ENCODE measurements at regions of chr20 and their contacts with region 1.

Region 1: GRCh38 chr20:44521484-44522481 is at the start of gene SERINC3:
- DNase-seq: peak; percentile 91 to 99
- H3K4me3 ChIP-seq: peak within 1 kb of the TSS; percentile 70 to 89
- H3K27ac ChIP-seq: peak within 1 kb of the TSS; percentile 94 to 99
- H3K4me1 ChIP-seq: peaks cover 9 to 35% of the 10 kb centered on the region in 2 donors
- H3K27me3 ChIP-seq: no peaks in the 10 kb centered on the region
- CTCF ChIP-seq: peak in 1 of 3 experiments; percentile 23
- total RNA-seq, gene SERINC3: 78.1 TPM

Region 2: DNA sequence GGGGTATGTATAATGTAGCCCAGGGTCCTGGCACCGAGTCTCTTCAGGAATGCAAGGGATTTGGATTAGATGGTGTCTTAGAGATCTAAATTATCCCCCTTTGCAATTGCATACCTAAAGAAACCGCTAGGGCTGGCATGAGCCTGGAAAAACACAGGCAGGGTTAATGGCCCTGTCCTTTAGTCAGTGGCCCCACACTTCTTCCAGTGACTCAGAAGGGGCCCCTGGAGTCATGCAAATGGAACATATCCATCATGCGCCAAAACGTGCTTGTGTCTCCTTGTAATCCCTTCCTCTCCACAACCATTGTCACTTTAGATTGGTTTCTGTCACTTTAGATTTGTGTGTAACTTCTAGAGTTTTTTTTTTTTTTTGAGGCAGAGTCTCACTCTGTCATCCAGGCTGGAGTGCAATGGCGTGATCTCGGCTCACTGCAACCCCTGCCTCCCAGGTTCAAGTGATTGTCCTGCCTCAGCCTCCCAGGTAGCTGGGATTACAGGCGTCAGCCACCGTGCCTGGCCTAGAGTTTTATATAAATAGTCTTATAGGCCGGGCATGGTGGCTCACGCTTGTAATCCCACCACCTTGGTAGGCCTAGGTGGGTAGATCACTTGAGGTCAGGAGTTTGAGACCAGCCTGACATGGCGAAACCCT is 863.6 kb before region 1 on chr20:
- intact Hi-C with region 1: no loop called
- DNase-seq: no peak
- H3K4me3 ChIP-seq: peak overlapping the region in 1 of 2 donors; percentile 75
- H3K27ac ChIP-seq: no peak overlapping the region
- H3K4me1 ChIP-seq: no peaks in the 10 kb centered on the region
- H3K27me3 ChIP-seq: no peaks in the 10 kb centered on the region
- CTCF ChIP-seq: no peak

Region 3: GRCh38 chr20:44532259-44532980 is 10.6 kb after region 1 on chr20:
- intact Hi-C with region 1: loop called (anchors 1 kb)
- DNase-seq: no peak
- H3K4me3 ChIP-seq: peak overlapping the region; percentile 73 to 99
- H3K27ac ChIP-seq: peak overlapping the region; percentile 3 to 76
- H3K4me1 ChIP-seq: peaks cover 0 to 10% of the 10 kb centered on the region in 2 donors
- H3K27me3 ChIP-seq: no peaks in the 10 kb centered on the region
- CTCF ChIP-seq: no peak

Region 4: GRCh38 chr20:44601801-44602204 is 80.0 kb after region 1 on chr20:
- intact Hi-C with region 1: loop called (anchors 2 kb)
- DNase-seq: peak in 1 of 2 donors; percentile 92
- H3K4me3 ChIP-seq: no peak overlapping the region
- H3K27ac ChIP-seq: peak overlapping the region; percentile 97
- H3K4me1 ChIP-seq: peaks cover 37 to 62% of the 10 kb centered on the region in 2 donors
- H3K27me3 ChIP-seq: no peaks in the 10 kb centered on the region
- CTCF ChIP-seq: no peak

Region 5: GRCh38 chr20:44747166-44748004 is 225.6 kb after region 1 on chr20:
- intact Hi-C with region 1: loop called (anchors 5 kb)
- DNase-seq: peak; percentile 29 to 92
- H3K4me3 ChIP-seq: peak overlapping the region; percentile 62 to 86
- H3K27ac ChIP-seq: peak overlapping the region; percentile 92 to 94
- H3K4me1 ChIP-seq: peaks cover 7 to 21% of the 10 kb centered on the region in 2 donors
- H3K27me3 ChIP-seq: no peaks in the 10 kb centered on the region
- CTCF ChIP-seq: peak; percentile 52 to 82 (median 65)